Calu3 (cell line): ENCODE measurements at regions of chr10 and their contacts with region 1.

Region 1: GRCh38 chr10:67115970-67116369 is 190.1 kb downstream of the LRRTM3 start:
- DNase-seq: peak; percentile 36
- H3K4me3 Mint-ChIP-seq: no peak overlapping the region
- H3K27ac Mint-ChIP-seq: peak overlapping the region; percentile 70
- H3K4me1 Mint-ChIP-seq: peaks cover 15% of the 10 kb centered on the region
- H3K27me3 Mint-ChIP-seq: peaks cover 20% of the 10 kb centered on the region
- CTCF ChIP-seq: no peak

Region 2: DNA sequence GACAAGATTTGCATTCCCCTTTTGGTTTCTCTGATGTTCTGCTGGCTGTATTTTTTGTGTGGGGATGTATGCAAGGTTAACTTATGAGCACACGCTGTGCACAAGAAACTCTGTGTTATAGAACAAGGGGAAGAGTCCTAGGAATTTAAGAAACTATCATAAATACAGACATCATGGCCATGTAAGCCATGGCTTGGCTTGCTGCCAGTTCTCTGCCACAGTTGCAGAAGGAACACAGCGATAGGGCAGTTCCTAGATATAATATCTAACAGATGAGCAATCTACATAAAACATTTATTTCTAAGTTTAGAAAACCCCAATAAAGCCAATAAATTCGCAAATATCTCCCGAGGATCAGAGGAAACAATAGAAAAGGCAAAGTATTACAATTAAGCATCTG is 36.8 kb before region 1 on chr10:
- CTCF ChIA-PET with region 1: no interaction called
- intact Hi-C with region 1: loop called (anchors 5 kb)
- DNase-seq: no peak
- H3K4me3 Mint-ChIP-seq: no peak overlapping the region
- H3K27ac Mint-ChIP-seq: no peak overlapping the region
- H3K4me1 Mint-ChIP-seq: peaks cover 9% of the 10 kb centered on the region
- H3K27me3 Mint-ChIP-seq: no peaks in the 10 kb centered on the region
- CTCF ChIP-seq: no peak

Region 3: GRCh38 chr10:67095531-67095930 is 20.4 kb before region 1 on chr10:
- CTCF ChIA-PET with region 1: no interaction called
- intact Hi-C with region 1: loop called (anchors 2 kb)
- DNase-seq: no peak
- H3K4me3 Mint-ChIP-seq: no peak overlapping the region
- H3K27ac Mint-ChIP-seq: no peak overlapping the region
- H3K4me1 Mint-ChIP-seq: no peaks in the 10 kb centered on the region
- H3K27me3 Mint-ChIP-seq: peaks cover 15% of the 10 kb centered on the region
- CTCF ChIP-seq: no peak

Region 4: DNA sequence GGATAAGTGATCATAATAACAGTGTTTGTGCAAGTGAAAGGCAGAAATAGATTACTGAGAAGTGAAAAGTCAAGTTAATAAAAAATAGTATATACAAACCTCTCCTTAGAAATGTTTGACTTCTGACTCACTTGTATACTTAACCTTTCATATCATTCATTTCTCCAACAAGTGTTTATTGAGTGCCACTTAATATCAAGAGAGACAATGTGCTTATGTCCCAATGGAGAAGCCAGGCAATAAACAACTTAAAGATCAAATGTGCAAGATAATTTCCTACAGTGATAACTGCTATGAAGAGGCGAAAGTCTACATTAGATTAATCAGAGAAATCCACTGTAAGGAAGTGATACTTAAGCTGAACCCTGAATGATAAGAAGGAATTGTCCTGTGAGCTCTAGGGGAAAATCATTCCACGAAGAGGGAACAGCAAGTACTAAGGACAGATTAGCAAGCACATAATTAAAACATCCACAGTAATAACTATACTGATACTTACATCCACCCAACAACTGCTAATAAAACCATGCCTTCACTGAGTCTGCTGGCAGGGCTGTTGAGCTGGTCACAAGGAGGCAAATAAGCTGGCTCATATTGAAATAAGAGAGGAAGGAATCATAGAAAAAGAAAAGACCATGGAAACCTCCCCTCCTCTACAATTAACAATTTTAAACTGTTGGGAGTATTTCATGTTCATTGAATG is 376.5 kb after region 1 on chr10:
- CTCF ChIA-PET with region 1: no interaction called
- intact Hi-C with region 1: loop called (anchors 10 kb)
- DNase-seq: no peak
- H3K4me3 Mint-ChIP-seq: peak overlapping the region; percentile 24
- H3K27ac Mint-ChIP-seq: peak overlapping the region; percentile 28
- H3K4me1 Mint-ChIP-seq: peaks cover 32% of the 10 kb centered on the region
- H3K27me3 Mint-ChIP-seq: peaks cover 46% of the 10 kb centered on the region
- CTCF ChIP-seq: no peak

Region 5: GRCh38 chr10:67527354-67527753 is 411.4 kb after region 1 on chr10:
- CTCF ChIA-PET with region 1: interaction called, 6 read pairs
- intact Hi-C with region 1: loop called (anchors 5 kb)
- DNase-seq: no peak
- H3K4me3 Mint-ChIP-seq: no peak overlapping the region
- H3K27ac Mint-ChIP-seq: no peak overlapping the region
- H3K4me1 Mint-ChIP-seq: no peaks in the 10 kb centered on the region
- H3K27me3 Mint-ChIP-seq: peaks cover 2% of the 10 kb centered on the region
- CTCF ChIP-seq: no peak